Adrenal gland (tissue), 19 donors: ENCODE measurements at regions of chr2 and their contacts with region 1.

Region 1: DNA sequence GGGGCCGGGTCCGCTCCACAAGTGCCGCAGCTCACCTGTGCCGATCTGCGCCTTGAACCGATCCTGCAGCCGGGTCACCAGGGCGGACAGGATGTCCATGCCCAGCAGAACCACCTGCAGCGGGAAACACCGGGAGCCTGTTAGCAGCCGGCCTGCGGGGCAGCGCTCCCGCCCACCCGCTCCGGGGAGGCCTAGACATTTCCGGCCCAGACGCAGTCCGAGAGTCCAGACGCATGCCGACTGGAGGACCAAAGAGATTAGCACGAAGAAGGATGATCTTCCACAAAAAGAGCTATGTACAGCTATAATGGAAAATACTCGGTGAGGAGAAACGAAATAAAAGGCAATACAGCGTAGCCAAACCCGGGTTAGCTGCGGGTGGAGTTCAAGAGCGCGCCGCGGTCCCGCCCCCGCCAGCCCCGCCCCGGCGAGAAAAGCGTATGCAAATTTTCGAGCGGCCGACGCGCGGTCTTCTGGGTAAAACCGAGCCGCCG is 421 bp upstream of the RNU4ATAC start:
- DNase-seq: peak; percentile 79 to 90 (median 82)
- H3K4me3 ChIP-seq: peak overlapping the region; percentile 5 to 75 (median 68)
- H3K27ac ChIP-seq: peak overlapping the region; percentile 93 to 98 (median 96)
- H3K4me1 ChIP-seq: peaks cover 20 to 76% of the 10 kb centered on the region in 2 donors
- H3K27me3 ChIP-seq: no peaks in the 10 kb centered on the region
- CTCF ChIP-seq: no peak
- POLR2A ChIP-seq: no peak

Region 2: GRCh38 chr2:121400201-121400600 is 130.1 kb before region 1 on chr2:
- intact Hi-C with region 1: loop called (anchors 10 kb)
- DNase-seq: no peak
- H3K4me3 ChIP-seq: no peak overlapping the region
- H3K27ac ChIP-seq: no peak overlapping the region
- H3K4me1 ChIP-seq: no peaks in the 10 kb centered on the region
- H3K27me3 ChIP-seq: no peaks in the 10 kb centered on the region
- CTCF ChIP-seq: no peak
- POLR2A ChIP-seq: no peak

Region 3: DNA sequence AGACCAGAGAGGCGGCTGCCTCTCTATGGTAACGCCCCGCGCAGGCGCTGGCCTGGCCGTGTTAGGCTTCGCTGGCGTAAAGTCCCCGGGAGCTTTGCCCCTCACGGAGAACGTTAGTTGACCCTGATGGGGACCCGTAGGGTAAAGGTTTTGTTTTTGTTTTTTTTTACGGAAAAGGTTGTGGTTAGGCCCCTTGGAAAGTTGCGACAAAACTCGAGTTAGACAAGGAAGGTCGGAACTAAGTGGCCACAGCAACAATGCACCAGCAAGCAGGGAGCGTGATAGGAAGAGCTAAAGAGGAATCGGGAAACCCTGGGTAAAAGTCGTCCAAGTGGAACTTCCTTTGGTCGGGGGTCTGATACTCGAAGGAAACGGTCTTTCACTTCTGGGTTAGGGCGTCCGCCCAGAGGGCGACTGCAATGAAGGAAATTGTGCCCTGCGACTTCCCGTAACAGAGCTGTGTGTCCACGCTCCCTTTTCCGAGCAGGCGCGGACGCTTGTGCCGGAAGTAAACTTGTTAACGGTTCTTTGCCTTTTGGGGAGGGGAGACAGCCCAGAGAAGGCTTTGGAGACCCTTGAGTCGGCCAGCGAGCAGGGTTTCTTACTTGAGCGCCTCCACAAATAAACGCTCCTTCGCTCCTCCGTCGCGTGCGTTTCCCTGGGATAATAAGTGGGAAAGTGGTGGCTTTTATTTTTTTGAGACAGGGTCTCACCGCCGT is 119.5 kb after region 1 on chr2:
- intact Hi-C with region 1: loop called (anchors 5 to 10 kb)
- DNase-seq: peak; percentile 96 to 99 (median 98)
- H3K4me3 ChIP-seq: peak overlapping the region; percentile 17 to 82 (median 68)
- H3K27ac ChIP-seq: peak overlapping the region; percentile 76 to 97 (median 92)
- H3K4me1 ChIP-seq: peaks cover 16 to 50% of the 10 kb centered on the region in 2 donors
- H3K27me3 ChIP-seq: no peaks in the 10 kb centered on the region
- CTCF ChIP-seq: no peak
- POLR2A ChIP-seq: no peak

Region 4: DNA sequence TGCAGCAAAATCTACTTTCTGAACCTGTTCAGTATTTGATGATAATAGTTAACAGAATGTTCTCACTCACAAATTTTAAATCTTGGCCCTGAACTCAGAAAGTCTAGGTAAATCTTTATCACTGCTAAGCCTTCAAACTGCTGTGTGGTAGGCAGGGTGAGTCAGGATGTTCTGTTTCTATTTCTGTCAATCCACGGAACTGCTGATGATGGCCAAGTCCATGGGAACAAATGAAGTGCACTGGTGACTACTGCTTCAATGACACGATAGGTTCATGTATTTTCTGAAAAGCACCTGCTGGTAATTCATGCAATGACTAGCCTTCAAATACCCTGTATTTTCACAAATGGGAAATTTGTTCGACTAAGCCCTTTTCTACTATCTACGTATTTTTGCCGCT is 192.2 kb after region 1 on chr2:
- intact Hi-C with region 1: loop called (anchors 5 kb)
- DNase-seq: peak in 4 of 7 donors; percentile 29 to 42 (median 40)
- H3K4me3 ChIP-seq: no peak overlapping the region
- H3K27ac ChIP-seq: peak overlapping the region in 2 of 5 donors; percentile 24 to 35
- H3K4me1 ChIP-seq: peaks cover 8 to 11% of the 10 kb centered on the region in 2 donors
- H3K27me3 ChIP-seq: no peaks in the 10 kb centered on the region
- CTCF ChIP-seq: no peak
- POLR2A ChIP-seq: no peak